Astrocyte of the cerebellum (primary cell): ENCODE measurements at regions of chr1 and their contacts with region 1.

Region 1: GRCh38 chr1:66788231-66788939 is 12.7 kb downstream of the INSL5 start:
- DNase-seq: no peak
- H3K4me3 ChIP-seq: no peak overlapping the region
- CTCF ChIP-seq: no peak

Region 2: DNA sequence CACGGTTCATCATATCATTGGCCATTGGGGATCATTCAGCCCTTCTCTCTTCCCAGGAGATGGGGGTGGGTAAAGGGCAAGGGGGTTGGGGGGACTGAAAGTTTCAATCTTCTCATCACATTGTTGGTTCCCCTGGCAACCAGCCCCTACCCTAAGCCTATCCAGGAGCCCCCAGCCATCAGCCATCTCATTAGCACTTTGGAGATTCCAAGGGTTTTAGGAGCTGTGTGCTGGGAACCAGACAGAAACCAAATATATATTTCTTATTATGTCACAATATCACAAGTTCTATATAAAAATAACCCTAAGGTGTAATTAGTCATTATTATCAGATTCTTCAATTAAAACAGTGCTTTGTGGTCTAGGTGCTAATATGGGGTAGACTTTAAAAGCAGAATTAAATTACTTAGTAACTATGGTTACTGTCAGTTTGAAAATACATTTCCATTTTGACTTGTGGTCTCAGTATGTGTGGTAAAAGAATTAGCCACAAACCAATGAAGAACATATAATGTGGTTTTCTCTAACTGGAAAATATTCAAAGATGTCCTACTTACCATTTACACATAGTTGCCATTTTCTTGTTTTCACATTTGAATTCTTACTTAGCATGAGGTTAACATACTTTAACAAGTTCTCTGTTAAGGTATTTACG is 406.0 kb after region 1 on chr1:
- in situ Hi-C with region 1: loop called (anchors 25 kb)
- DNase-seq: peak; percentile 13
- H3K4me3 ChIP-seq: no peak overlapping the region
- CTCF ChIP-seq: no peak